OCI-LY7 (cell line): ENCODE measurements at regions of chr6 and their contacts with region 1.

Region 1: GRCh38 chr6:87534377-87535047 is 55.3 kb downstream of the RARS2 start:
- DNase-seq: no peak
- H3K4me3 ChIP-seq: no peak overlapping the region
- H3K27ac ChIP-seq: no peak overlapping the region
- H3K4me1 ChIP-seq: no peaks in the 10 kb centered on the region
- CTCF ChIP-seq: no peak

Region 2: DNA sequence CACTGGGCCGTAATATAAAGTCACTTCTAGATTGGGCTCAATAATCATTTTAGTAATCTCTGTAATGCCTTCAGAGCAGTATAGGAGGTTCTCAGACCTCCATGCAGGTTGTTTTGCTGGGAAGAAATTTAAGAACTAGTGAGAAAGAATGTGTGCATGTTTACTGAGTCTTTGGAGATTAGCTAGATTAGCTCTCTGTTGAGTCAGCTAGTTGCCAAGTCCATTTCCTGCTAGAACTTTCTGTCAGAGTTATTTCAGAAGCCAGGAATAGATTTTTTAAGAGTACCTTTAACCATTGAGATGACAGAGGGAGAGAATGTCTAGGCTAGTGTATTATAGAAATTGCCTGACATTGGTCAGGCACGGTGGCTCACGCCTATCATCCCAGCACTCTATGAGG is 88.7 kb after region 1 on chr6:
- CTCF ChIA-PET with region 1: no interaction called
- POLR2A ChIA-PET with region 1: no interaction called
- intact Hi-C with region 1: loop called (anchors 5 kb)
- DNase-seq: no peak
- H3K4me3 ChIP-seq: no peak overlapping the region
- H3K27ac ChIP-seq: no peak overlapping the region
- H3K4me1 ChIP-seq: no peaks in the 10 kb centered on the region
- CTCF ChIP-seq: no peak